ENCODE measurements at regions of chr11 and their contacts with region 1.

Region 1: DNA sequence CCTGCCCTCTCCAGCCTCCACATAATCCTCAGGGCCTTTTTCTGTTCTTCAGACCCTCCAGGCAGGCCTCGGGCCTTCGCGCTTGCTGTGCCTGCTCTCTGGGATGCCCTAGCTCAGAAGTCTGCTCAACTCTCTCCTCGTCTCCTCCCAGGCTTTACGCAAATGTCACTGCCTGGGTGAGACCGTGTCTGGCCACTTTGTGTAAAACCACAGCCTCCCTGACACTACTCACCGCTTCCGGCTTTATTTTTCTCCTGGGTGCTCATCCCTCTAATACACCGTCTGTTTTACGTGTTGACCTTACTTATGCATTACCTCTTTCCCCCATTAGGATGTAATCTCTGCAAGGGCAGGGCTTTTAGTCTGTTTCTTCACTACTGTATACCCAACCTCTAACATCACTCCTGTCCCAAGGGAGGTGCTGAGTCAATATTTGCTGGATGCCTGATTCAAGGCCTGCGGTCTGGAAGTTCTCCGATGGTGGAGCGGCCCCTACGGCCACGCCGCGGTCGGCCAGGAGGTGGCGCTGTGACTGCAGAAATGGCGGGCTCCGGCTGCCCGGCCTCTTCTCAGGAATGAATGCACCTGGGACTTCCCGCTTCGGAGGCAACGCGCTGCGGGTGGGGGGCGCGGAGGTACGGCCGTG is 58.2 kb upstream of the THY1 start:
- DNase-seq: peak; percentile 87
- H3K4me3 Mint-ChIP-seq: no peak overlapping the region
- H3K27ac Mint-ChIP-seq: no peak overlapping the region
- H3K4me1 Mint-ChIP-seq: no peaks in the 10 kb centered on the region
- H3K27me3 Mint-ChIP-seq: peaks cover 6% of the 10 kb centered on the region

Region 2: GRCh38 chr11:119533921-119534736 is 53.0 kb after region 1 on chr11:
- CTCF ChIA-PET with region 1: interaction called, 9 read pairs
- intact Hi-C with region 1: loop called (anchors 1 kb)
- DNase-seq: peak; percentile 76
- H3K4me3 Mint-ChIP-seq: no peak overlapping the region
- H3K27ac Mint-ChIP-seq: no peak overlapping the region
- H3K4me1 Mint-ChIP-seq: no peaks in the 10 kb centered on the region
- H3K27me3 Mint-ChIP-seq: peaks cover 4% of the 10 kb centered on the region

Region 3: DNA sequence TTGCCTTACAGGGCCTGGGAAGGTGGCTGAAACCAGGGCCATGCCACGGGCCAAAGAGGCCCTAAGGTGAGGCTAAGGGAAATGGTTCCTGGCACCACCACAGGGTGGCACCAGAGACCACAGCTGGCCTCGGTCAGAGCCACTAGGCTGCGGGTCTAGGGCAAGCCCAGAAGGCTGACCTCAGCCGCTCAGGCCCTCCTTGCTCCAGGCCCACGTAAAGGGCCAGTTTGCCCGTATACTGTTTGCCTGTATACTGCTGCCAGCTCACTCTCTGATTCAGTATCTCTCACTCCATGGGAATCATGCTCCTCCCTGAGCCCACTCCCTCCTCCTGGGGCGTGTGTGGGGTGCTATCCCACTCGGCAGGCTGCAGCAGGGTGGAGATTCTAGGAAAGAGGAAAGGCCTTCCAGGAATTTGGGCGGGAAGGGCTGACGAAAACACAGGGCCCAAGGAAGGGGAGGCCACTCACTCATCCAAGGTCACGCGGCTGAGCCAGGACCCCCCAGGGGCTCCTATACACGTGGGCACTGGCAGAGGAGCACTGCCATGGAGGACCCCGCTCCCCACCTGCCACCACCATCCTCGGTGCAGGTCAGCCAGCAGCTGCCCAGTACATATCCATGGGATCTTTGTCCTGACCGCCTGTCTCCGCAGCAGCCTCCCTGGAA is 185.5 kb after region 1 on chr11:
- CTCF ChIA-PET with region 1: no interaction called
- intact Hi-C with region 1: loop called (anchors 5 kb)
- DNase-seq: peak; percentile 72
- H3K4me3 Mint-ChIP-seq: no peak overlapping the region
- H3K27ac Mint-ChIP-seq: no peak overlapping the region
- H3K4me1 Mint-ChIP-seq: no peaks in the 10 kb centered on the region
- H3K27me3 Mint-ChIP-seq: no peaks in the 10 kb centered on the region

Region 4: GRCh38 chr11:119741369-119742262 is 260.5 kb after region 1 on chr11:
- CTCF ChIA-PET with region 1: no interaction called
- intact Hi-C with region 1: loop called (anchors 5 kb)
- DNase-seq: peak; percentile 64
- H3K4me3 Mint-ChIP-seq: peak overlapping the region; percentile 30
- H3K27ac Mint-ChIP-seq: no peak overlapping the region
- H3K4me1 Mint-ChIP-seq: peaks cover 11% of the 10 kb centered on the region
- H3K27me3 Mint-ChIP-seq: peaks cover 39% of the 10 kb centered on the region

Region 5: GRCh38 chr11:120108154-120108865 is 627.2 kb after region 1 on chr11:
- CTCF ChIA-PET with region 1: no interaction called
- intact Hi-C with region 1: loop called (anchors 1 kb)
- DNase-seq: peak; percentile 74
- H3K4me3 Mint-ChIP-seq: no peak overlapping the region
- H3K27ac Mint-ChIP-seq: no peak overlapping the region
- H3K4me1 Mint-ChIP-seq: no peaks in the 10 kb centered on the region
- H3K27me3 Mint-ChIP-seq: peaks cover 9% of the 10 kb centered on the region

Region 6: GRCh38 chr11:120172054-120172911 is 691.1 kb after region 1 on chr11:
- CTCF ChIA-PET with region 1: no interaction called
- intact Hi-C with region 1: loop called (anchors 2 kb)
- DNase-seq: peak; percentile 71
- H3K4me3 Mint-ChIP-seq: no peak overlapping the region
- H3K27ac Mint-ChIP-seq: no peak overlapping the region
- H3K4me1 Mint-ChIP-seq: peaks cover 4% of the 10 kb centered on the region
- H3K27me3 Mint-ChIP-seq: peaks cover 50% of the 10 kb centered on the region